HEK293T (cell line): ENCODE measurements at regions of chr14 and their contacts with region 1.

Region 1: GRCh38 chr14:81164167-81164774 is 56.5 kb downstream of the GTF2A1 start:
- DNase-seq: peak; percentile 68

Region 2: DNA sequence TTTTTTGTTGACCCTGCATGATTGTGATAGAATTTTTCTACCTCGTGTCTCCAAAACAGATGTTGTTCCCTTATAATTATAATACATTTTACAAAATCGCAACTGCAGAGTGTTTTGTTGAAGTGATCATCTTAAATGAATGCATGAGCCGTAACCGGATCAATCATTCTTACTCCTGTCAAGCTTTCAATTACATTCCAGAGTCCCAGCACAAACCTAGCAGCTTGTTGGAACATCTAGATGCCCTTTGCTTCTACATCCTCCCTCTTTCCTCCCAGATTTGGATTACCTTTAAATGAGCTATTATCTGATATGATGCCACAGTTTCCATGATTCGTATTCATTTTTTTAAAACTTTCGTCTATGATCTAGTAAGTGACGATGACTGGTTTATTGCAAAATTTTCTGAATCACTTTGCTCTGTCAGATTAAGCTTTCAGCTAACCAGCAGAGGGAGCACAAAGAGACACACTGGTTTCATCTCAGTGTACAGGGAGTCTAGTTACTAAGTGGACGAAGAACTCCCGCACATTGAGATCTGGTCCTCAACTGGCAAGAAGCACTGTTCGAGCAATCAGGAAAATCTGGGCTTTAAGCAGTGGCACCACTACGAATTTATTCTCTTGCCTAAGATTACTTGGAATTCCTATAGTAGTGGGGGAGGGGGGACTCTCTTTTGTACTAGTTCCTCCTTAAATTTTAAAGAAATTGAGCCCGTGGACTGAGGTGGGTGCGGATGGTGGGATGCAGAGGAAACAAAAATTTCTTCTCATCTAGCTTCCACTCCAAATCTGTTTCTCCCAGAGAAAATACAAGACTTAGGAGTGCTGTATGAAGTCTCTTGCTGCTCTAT is 168.0 kb before region 1 on chr14:
- CTCF ChIA-PET with region 1: interaction called, 19 read pairs
- POLR2A ChIA-PET with region 1: no interaction called
- DNase-seq: peak; percentile 67

Region 3: GRCh38 chr14:81141426-81141825 is 22.8 kb before region 1 on chr14:
- CTCF ChIA-PET with region 1: no interaction called
- POLR2A ChIA-PET with region 1: no interaction called
- DNase-seq: no peak